HepG2 (cell line): ENCODE measurements at regions of chr1 and their contacts with region 1.

Region 1: GRCh38 chr1:36223993-36224536 is at the start of gene THRAP3:
- DNase-seq: peak; percentile 98
- ATAC-seq: peak; percentile 96
- H3K4me3 ChIP-seq: peak within 1 kb of the TSS; percentile 86 to 100 (median 89)
- H3K27ac ChIP-seq: peak within 1 kb of the TSS; percentile 94
- H3K4me1 ChIP-seq: peaks cover 37% of the 10 kb centered on the region
- H3K27me3 ChIP-seq: no peaks in the 10 kb centered on the region; a peak in 1 of 5 replicates
- CTCF ChIP-seq: peak; percentile 27; the same call in 1 of the 2 replicates
- EP300 ChIP-seq: peak; percentile 19 to 24; a peak in 2 of 4 replicates
- POLR2A ChIP-seq: peak; percentile 82 to 93
- RAD21 ChIP-seq: no peak; the same call in 1 of the 2 replicates
- total RNA-seq, gene THRAP3: 92.6 and 127 TPM in 2 replicates

Region 2: DNA sequence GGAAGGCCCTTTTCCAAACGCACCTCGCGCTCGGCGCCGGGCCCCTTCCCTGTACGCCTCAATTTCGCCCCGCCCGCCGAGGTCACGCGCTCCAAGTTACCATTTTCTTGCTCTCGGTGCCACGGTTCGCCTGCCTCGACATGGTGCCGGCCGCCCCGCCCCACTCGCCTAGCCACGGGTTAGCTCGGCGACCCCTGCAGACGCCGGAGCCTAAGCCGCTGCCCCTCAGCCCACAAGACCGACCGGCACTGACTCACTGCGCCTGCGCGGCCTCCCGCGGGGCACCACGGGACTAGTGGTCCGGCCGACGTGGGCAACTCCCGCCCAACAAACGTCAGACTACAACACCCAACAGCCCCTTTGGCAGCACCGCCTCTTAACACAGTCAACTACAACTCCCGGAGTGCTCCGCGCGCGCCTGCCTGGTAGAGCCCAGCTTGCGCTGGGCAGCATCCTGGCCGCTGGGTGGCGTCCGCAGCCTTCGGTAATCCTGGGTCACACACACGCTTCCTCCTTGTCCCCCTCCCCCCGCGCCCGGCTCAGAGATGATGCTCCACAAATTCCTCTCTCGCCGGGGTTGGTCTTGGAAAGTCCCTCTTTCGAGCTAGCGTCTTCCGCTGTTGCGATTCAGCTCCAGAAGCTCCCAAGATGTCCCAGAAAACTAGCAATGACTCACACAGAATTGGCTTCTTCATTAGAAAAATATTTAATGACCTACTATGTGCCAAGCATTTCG is 74.7 kb before region 1 on chr1 and contains the start of gene TRAPPC3:
- CTCF ChIA-PET with region 1: no interaction called
- POLR2A ChIA-PET with region 1: interaction called, 26 read pairs
- in situ Hi-C with region 1: no loop called
- intact Hi-C with region 1: loop called (anchors 10 kb)
- DNase-seq: peak; percentile 99
- ATAC-seq: peak; percentile 88
- H3K4me3 ChIP-seq: peak within 1 kb of the TSS; percentile 76 to 83 (median 81)
- H3K27ac ChIP-seq: peak within 1 kb of the TSS; percentile 80
- H3K4me1 ChIP-seq: peaks cover 58% of the 10 kb centered on the region
- H3K27me3 ChIP-seq: no peaks in the 10 kb centered on the region
- CTCF ChIP-seq: peak; percentile 98
- EP300 ChIP-seq: no peak
- POLR2A ChIP-seq: peak in 1 of 2 experiments; percentile 72; a peak in 2 of 4 replicates
- RAD21 ChIP-seq: peak; percentile 99
- total RNA-seq, gene TRAPPC3: 62.4 and 66.7 TPM in 2 replicates

Region 3: GRCh38 chr1:36212782-36213181 is 11.3 kb before region 1 on chr1:
- CTCF ChIA-PET with region 1: no interaction called
- POLR2A ChIA-PET with region 1: interaction called, 23 read pairs
- in situ Hi-C with region 1: no loop called
- intact Hi-C with region 1: no loop called
- DNase-seq: no peak
- ATAC-seq: peak; percentile 33; the same call in 2 of the 3 replicates
- H3K4me3 ChIP-seq: no peak overlapping the region
- H3K27ac ChIP-seq: no peak overlapping the region
- H3K4me1 ChIP-seq: peaks cover 50% of the 10 kb centered on the region
- H3K27me3 ChIP-seq: no peaks in the 10 kb centered on the region
- CTCF ChIP-seq: no peak
- EP300 ChIP-seq: no peak
- POLR2A ChIP-seq: no peak
- RAD21 ChIP-seq: no peak

Region 4: GRCh38 chr1:36248250-36248894 is 24.3 kb after region 1 on chr1:
- CTCF ChIA-PET with region 1: no interaction called
- POLR2A ChIA-PET with region 1: interaction called, 22 read pairs
- in situ Hi-C with region 1: no loop called
- intact Hi-C with region 1: no loop called
- DNase-seq: peak; percentile 95
- ATAC-seq: peak; percentile 94
- H3K4me3 ChIP-seq: no peak overlapping the region
- H3K27ac ChIP-seq: peak overlapping the region; percentile 85
- H3K4me1 ChIP-seq: peaks cover 81% of the 10 kb centered on the region
- H3K27me3 ChIP-seq: no peaks in the 10 kb centered on the region
- CTCF ChIP-seq: no peak
- EP300 ChIP-seq: peak; percentile 87 to 91
- POLR2A ChIP-seq: no peak
- RAD21 ChIP-seq: no peak

Region 5: GRCh38 chr1:36285448-36286101 is 61.5 kb after region 1 on chr1:
- CTCF ChIA-PET with region 1: no interaction called
- POLR2A ChIA-PET with region 1: interaction called, 9 read pairs
- in situ Hi-C with region 1: no loop called
- intact Hi-C with region 1: loop called (anchors 1 kb)
- DNase-seq: peak; percentile 86
- ATAC-seq: peak; percentile 84
- H3K4me3 ChIP-seq: no peak overlapping the region
- H3K27ac ChIP-seq: no peak overlapping the region
- H3K4me1 ChIP-seq: no peaks in the 10 kb centered on the region; the same call in 1 of the 2 replicates
- H3K27me3 ChIP-seq: no peaks in the 10 kb centered on the region
- CTCF ChIP-seq: peak; percentile 80
- EP300 ChIP-seq: no peak
- POLR2A ChIP-seq: no peak
- RAD21 ChIP-seq: peak; percentile 87

Region 6: GRCh38 chr1:36337830-36338229 is 113.8 kb after region 1 on chr1:
- CTCF ChIA-PET with region 1: no interaction called
- POLR2A ChIA-PET with region 1: no interaction called
- in situ Hi-C with region 1: no loop called
- intact Hi-C with region 1: no loop called
- DNase-seq: no peak
- ATAC-seq: no peak; the same call in 2 of the 3 replicates
- H3K4me3 ChIP-seq: no peak overlapping the region
- H3K27ac ChIP-seq: no peak overlapping the region
- H3K4me1 ChIP-seq: peaks cover 26% of the 10 kb centered on the region
- H3K27me3 ChIP-seq: peaks cover 0 to 13% of the 10 kb centered on the region in 2 experiments; a peak in 2 of 5 replicates
- CTCF ChIP-seq: no peak
- EP300 ChIP-seq: no peak
- POLR2A ChIP-seq: no peak
- RAD21 ChIP-seq: no peak

Region 7: DNA sequence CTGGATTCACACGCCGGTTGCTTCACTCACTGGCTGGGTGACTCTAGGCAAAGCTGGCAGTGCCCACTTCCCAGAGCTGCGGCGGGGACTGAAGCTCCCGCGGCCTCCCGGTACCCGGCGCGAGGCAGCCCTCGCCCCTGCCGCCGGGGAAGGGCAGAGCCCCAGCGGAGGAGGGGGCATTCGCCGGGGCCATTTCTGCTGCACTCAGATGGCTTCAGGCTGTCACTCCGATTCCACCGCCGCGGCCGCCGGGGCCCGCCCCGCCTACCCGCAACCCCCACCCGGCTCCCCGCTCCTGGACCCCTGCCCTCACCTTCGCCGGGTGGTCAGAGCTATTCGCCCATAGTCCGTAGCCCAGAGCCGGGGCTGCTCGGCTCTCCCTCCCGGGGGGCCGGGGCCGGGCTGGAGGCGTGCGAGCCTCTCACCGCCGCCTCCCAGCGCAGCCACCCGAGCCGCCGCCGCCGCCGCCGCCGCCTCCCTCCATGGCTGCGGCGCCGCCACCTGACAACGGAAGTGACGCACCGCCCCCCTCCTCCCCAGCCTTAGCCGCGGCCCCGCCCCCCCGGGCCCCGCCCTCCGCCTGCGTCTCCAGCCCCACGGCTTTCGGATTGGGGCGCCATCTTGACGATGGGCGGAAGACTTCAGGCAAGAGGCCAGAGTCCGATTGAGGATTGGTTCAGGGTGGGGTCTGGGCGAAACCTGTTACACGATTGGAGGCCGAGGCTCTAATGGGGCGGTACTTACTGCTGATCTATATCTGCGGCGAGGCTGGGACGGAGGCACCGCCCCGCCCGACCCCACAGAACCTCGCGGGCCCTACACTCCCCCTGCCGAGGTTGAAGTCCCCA is 161.6 kb after region 1 on chr1 and contains the start of gene STK40:
- CTCF ChIA-PET with region 1: no interaction called
- POLR2A ChIA-PET with region 1: interaction called, 10 read pairs
- in situ Hi-C with region 1: no loop called
- intact Hi-C with region 1: no loop called
- DNase-seq: peak; percentile 98
- ATAC-seq: peak; percentile 92
- H3K4me3 ChIP-seq: peak within 1 kb of the TSS; percentile 92 to 98 (median 97)
- H3K27ac ChIP-seq: peak within 1 kb of the TSS; percentile 99
- H3K4me1 ChIP-seq: peaks cover 59% of the 10 kb centered on the region
- H3K27me3 ChIP-seq: no peaks in the 10 kb centered on the region; a peak in 1 of 5 replicates
- CTCF ChIP-seq: no peak; the same call in 1 of the 2 replicates
- EP300 ChIP-seq: no peak
- POLR2A ChIP-seq: peak in 1 of 2 experiments; percentile 46; a peak in 1 of 4 replicates
- RAD21 ChIP-seq: no peak
- total RNA-seq, gene STK40: 33.8 and 40.1 TPM in 2 replicates